PC-9 (cell line): ENCODE measurements at regions of chr22 and their contacts with region 1.

Region 1: GRCh38 chr22:44448271-44448830 is 49.7 kb downstream of the RTL6 start:
- DNase-seq: peak; percentile 89 to 94
- H3K4me3 ChIP-seq: peak overlapping the region; percentile 24; the same call in 1 of the 2 replicates
- H3K27ac ChIP-seq: peak overlapping the region; percentile 89
- H3K4me1 ChIP-seq: peaks cover 72% of the 10 kb centered on the region
- H3K27me3 ChIP-seq: no peaks in the 10 kb centered on the region
- CTCF ChIP-seq: no peak

Region 2: DNA sequence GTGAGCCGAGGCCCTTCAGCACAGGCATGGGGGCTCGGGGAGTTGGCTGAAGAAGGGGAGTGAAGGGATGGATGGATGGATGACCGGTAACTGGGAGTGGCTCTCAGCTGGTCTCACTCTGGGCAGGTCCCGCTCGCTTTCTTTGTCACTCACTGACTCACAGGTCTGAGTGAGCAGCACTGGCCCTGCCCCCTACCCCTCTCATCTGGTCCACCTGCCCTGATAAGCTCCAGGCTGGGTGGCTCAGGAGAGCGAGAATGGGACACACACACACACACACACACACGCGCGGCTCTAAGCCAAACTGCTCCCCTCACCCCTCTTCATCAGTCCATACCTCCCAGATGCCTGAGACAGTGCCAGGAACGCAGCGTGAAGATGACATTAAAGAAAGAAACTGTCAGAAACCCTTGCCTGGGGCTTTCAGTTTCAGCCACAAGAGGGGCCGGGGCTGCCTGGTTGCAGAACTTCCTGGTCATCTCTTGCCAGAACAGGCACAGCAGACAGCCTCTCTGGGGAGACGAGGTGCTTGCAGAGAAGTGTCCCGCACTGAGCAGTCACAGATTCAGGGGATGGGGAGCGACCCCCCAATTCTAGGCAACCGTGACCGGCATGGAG is 119.1 kb before region 1 on chr22:
- CTCF ChIA-PET with region 1: no interaction called
- POLR2A ChIA-PET with region 1: no interaction called
- intact Hi-C with region 1: loop called (anchors 5 kb)
- DNase-seq: peak; percentile 56 to 63
- H3K4me3 ChIP-seq: peak overlapping the region; percentile 3; the same call in 1 of the 2 replicates
- H3K27ac ChIP-seq: no peak overlapping the region
- H3K4me1 ChIP-seq: peaks cover 24% of the 10 kb centered on the region
- H3K27me3 ChIP-seq: peaks cover 9% of the 10 kb centered on the region
- CTCF ChIP-seq: no peak

Region 3: GRCh38 chr22:44486538-44486937 is 38.2 kb after region 1 on chr22:
- CTCF ChIA-PET with region 1: no interaction called
- POLR2A ChIA-PET with region 1: no interaction called
- intact Hi-C with region 1: loop called (anchors 1 kb)
- DNase-seq: peak; percentile 57 to 77
- H3K4me3 ChIP-seq: no peak overlapping the region
- H3K27ac ChIP-seq: no peak overlapping the region
- H3K4me1 ChIP-seq: peaks cover 39% of the 10 kb centered on the region
- H3K27me3 ChIP-seq: no peaks in the 10 kb centered on the region
- CTCF ChIP-seq: no peak

Region 4: DNA sequence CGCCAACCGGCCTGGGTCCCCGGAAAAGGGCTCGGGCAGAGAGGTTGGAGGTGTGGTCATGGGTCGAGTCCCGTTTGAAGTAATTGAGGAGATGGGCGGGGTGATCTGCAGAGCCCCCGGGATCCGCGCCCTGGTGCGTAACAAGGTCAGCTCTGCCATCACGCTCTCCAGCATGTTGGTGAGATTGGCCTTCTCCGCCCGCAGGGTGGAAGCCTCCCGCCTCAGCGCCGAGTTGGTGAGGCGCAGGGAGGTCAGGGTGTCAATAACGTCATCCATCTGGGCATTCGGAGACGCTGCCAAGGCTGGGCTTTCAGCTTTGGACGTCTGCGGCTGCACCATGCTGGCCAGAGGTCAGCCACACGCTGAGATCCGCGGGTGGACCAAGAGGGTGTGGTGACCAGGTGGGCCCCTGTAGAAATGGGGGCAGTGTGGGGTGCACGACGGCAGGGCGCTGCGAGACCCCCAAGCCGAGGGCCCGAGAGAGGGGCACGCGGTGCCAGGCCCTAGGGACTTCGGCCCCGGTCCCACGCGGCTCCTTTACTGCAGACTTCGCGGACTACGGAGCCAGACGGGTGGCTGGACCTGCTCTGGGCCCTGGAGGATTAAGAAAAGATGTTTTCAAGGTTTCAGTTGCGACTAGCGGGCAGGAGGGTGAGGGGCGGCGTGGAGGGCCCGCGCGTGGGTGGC is 49.0 kb after region 1 on chr22:
- CTCF ChIA-PET with region 1: no interaction called
- POLR2A ChIA-PET with region 1: no interaction called
- intact Hi-C with region 1: loop called (anchors 5 kb)
- DNase-seq: peak in 1 of 2 experiments; percentile 46
- H3K4me3 ChIP-seq: peak overlapping the region; percentile 98
- H3K27ac ChIP-seq: peak overlapping the region; percentile 78
- H3K4me1 ChIP-seq: peaks cover 24% of the 10 kb centered on the region
- H3K27me3 ChIP-seq: no peaks in the 10 kb centered on the region
- CTCF ChIP-seq: no peak

Region 5: DNA sequence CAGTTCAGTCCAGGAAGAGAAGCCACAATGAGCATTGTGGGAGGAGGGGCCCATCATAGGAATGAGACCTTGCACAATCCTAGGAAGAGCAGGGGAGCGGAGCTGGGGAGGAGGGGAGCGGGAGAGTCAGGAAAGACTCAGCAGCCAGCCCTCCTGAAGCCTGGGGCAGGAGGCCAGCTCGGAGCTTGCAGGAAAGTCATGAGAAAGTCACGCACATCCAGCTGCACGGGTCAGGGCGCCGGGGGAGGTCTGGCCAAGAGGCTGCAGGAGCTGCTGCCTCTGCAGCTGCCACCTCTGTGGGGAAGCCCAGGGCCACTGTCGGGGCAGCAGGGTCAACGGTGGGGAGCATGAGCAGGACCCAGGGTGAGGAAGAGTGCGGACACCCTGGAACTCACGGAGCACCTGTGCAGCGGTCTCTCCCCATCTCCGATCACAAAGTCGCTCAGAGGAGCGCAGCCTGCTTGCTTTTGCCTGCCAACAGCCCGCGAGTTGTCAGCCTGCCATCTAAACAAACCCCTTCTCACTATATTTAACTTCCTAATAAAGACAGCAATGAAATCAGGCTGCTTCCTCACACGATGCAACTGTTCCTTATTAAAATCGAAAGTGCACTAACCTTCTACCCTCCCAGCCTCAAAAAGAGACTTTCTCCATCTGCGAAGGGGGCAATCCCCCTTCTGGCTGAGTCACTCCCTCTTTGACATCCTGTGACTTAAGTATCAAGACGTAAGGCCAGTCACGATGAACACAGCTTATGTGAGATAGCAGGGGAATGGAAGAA is 102.5 kb after region 1 on chr22:
- CTCF ChIA-PET with region 1: no interaction called
- POLR2A ChIA-PET with region 1: no interaction called
- intact Hi-C with region 1: loop called (anchors 10 kb)
- DNase-seq: peak; percentile 80 to 93
- H3K4me3 ChIP-seq: peak overlapping the region; percentile 51
- H3K27ac ChIP-seq: peak overlapping the region; percentile 95
- H3K4me1 ChIP-seq: peaks cover 30% of the 10 kb centered on the region
- H3K27me3 ChIP-seq: no peaks in the 10 kb centered on the region
- CTCF ChIP-seq: no peak